ENCODE measurements at regions of chr20 and their contacts with region 1.

Region 1: DNA sequence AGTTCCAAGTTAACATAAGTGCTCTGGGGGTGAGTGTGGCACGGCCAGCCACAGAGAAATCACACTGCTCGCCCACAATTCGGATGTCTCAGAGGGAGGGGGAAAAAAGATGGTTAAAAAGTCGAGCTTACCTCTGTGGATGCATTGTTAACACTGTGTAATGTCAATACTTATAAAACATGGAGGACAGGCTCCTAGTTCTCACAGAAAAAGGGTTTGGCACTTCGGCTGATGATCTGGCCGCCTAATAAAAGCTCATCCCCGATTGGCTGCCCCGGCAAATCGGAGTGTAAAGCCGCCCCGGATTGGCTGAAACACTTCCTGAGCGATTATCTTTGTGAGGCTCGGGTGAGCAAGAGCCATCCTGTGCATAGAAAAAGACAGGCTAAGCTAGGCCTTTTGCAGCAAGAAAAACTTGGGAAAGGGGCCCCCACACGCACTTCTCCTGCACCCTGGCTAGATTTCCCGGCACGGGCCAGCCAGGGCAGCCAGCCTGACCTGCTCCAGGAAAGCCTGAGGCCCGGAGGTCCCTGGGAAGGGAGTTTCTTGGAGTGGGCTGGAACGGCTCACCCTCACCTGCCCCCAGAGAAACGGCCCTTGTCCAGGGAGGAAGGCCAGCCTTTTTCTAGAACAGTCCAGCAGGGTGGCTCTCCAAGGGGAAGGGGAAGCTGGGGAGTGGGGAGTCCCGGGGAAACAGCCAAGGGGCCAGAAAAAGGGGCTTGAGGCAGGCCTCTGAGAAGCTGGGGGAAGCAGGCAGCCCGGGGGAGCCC is at the start of gene ZMYND8:
- DNase-seq: peak; percentile 99
- H3K4me3 Mint-ChIP-seq: peak within 1 kb of the TSS; percentile 96
- H3K27ac Mint-ChIP-seq: peak within 1 kb of the TSS; percentile 98
- H3K4me1 Mint-ChIP-seq: peaks cover 35% of the 10 kb centered on the region
- H3K27me3 Mint-ChIP-seq: no peaks in the 10 kb centered on the region
- total RNA-seq, gene ZMYND8: 28.1 to 29.6 TPM

Region 2: GRCh38 chr20:47317127-47317895 is 39.4 kb before region 1 on chr20:
- CTCF ChIA-PET with region 1: no interaction called
- POLR2A ChIA-PET with region 1: interaction called, 7 read pairs
- intact Hi-C with region 1: loop called (anchors 1 kb)
- DNase-seq: peak; percentile 81
- H3K4me3 Mint-ChIP-seq: peak overlapping the region; percentile 20
- H3K27ac Mint-ChIP-seq: peak overlapping the region; percentile 82
- H3K4me1 Mint-ChIP-seq: peaks cover 58% of the 10 kb centered on the region
- H3K27me3 Mint-ChIP-seq: no peaks in the 10 kb centered on the region

Region 3: GRCh38 chr20:47411161-47411560 is 54.5 kb after region 1 on chr20:
- CTCF ChIA-PET with region 1: no interaction called
- POLR2A ChIA-PET with region 1: no interaction called
- intact Hi-C with region 1: loop called (anchors 2 kb)
- DNase-seq: no peak
- H3K4me3 Mint-ChIP-seq: peak overlapping the region; percentile 13
- H3K27ac Mint-ChIP-seq: no peak overlapping the region
- H3K4me1 Mint-ChIP-seq: peaks cover 31% of the 10 kb centered on the region
- H3K27me3 Mint-ChIP-seq: no peaks in the 10 kb centered on the region

Region 4: GRCh38 chr20:47663333-47664067 is 306.8 kb after region 1 on chr20:
- CTCF ChIA-PET with region 1: no interaction called
- POLR2A ChIA-PET with region 1: no interaction called
- intact Hi-C with region 1: no loop called
- DNase-seq: peak; percentile 85
- H3K4me3 Mint-ChIP-seq: no peak overlapping the region
- H3K27ac Mint-ChIP-seq: no peak overlapping the region
- H3K4me1 Mint-ChIP-seq: peaks cover 2% of the 10 kb centered on the region
- H3K27me3 Mint-ChIP-seq: no peaks in the 10 kb centered on the region